A549 (cell line): ENCODE measurements at regions of chr13 and their contacts with region 1.

Region 1: DNA sequence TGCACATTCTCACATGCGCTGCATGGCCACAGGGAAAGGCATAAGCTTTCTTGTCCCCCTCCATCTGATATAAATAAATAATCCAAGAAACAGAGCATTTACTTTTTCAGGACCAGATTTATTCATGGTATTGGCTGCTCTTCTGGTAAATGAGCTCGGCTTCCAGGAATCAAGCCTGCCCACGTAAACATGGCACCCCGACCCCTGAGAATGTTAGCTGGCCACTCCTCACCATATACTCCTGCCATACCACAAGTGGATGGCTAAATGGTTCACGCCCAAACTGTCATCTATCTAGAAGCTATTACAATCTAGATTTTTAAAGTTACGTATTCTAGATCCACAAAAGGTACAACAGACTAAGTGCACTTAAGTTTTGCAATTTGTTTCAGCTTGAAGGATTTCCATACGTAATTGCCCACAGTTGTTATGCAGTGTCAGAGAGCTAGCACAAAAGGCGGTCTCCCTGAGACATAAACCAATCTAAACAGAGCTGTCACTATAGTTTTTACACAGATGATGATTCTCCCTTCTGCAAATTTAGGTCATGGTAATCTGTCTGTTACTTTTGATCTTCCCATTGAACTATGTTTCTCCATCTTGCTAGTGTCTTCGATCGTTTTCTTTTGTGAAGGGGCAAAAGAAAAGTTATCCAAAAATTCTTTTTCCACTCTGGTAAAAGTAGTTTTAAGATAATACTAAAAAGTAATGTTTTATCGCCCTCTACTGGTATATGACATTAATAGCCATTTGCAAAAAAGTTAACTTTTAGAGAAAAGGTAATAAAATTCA is 16.2 kb upstream of the FOXO1 start:
- DNase-seq: peak in 1 of 2 experiments; percentile 7
- ATAC-seq: no peak
- H3K4me3 ChIP-seq: no peak overlapping the region
- H3K27ac ChIP-seq: no peak overlapping the region
- H3K4me1 ChIP-seq: no peaks in the 10 kb centered on the region
- CTCF ChIP-seq: peak; percentile 50
- EP300 ChIP-seq: no peak
- POLR2A ChIP-seq: no peak
- RAD21 ChIP-seq: peak; percentile 55 to 77

Region 2: GRCh38 chr13:39684531-39685137 is 998.0 kb before region 1 on chr13:
- CTCF ChIA-PET with region 1: interaction called, 13 read pairs
- POLR2A ChIA-PET with region 1: no interaction called
- DNase-seq: peak; percentile 3 to 28
- ATAC-seq: peak in 1 of 2 experiments; percentile 57; a peak in 2 of 6 replicates
- H3K4me3 ChIP-seq: no peak overlapping the region
- H3K27ac ChIP-seq: no peak overlapping the region
- H3K4me1 ChIP-seq: peaks cover 3% of the 10 kb centered on the region; the same call in 1 of the 3 replicates
- CTCF ChIP-seq: peak; percentile 34; the same call in 2 of the 3 replicates
- EP300 ChIP-seq: no peak
- POLR2A ChIP-seq: no peak
- RAD21 ChIP-seq: peak; percentile 25 to 44; a peak in 3 of 5 replicates

Region 3: GRCh38 chr13:39783050-39783449 is 899.6 kb before region 1 on chr13:
- CTCF ChIA-PET with region 1: interaction called, 11 read pairs
- POLR2A ChIA-PET with region 1: no interaction called
- DNase-seq: no peak
- ATAC-seq: no peak
- H3K4me3 ChIP-seq: no peak overlapping the region
- H3K27ac ChIP-seq: no peak overlapping the region
- H3K4me1 ChIP-seq: no peaks in the 10 kb centered on the region
- CTCF ChIP-seq: peak; percentile 20; the same call in 2 of the 3 replicates
- EP300 ChIP-seq: no peak
- POLR2A ChIP-seq: no peak
- RAD21 ChIP-seq: peak; percentile 25 to 30; a peak in 4 of 5 replicates

Region 4: GRCh38 chr13:39942552-39943273 is 739.9 kb before region 1 on chr13:
- CTCF ChIA-PET with region 1: interaction called, 56 read pairs
- POLR2A ChIA-PET with region 1: no interaction called
- DNase-seq: peak; percentile 58 to 76
- ATAC-seq: peak; percentile 99 to 100
- H3K4me3 ChIP-seq: no peak overlapping the region
- H3K27ac ChIP-seq: no peak overlapping the region
- H3K4me1 ChIP-seq: no peaks in the 10 kb centered on the region
- CTCF ChIP-seq: peak; percentile 91
- EP300 ChIP-seq: no peak
- POLR2A ChIP-seq: no peak
- RAD21 ChIP-seq: peak; percentile 70 to 75

Region 5: DNA sequence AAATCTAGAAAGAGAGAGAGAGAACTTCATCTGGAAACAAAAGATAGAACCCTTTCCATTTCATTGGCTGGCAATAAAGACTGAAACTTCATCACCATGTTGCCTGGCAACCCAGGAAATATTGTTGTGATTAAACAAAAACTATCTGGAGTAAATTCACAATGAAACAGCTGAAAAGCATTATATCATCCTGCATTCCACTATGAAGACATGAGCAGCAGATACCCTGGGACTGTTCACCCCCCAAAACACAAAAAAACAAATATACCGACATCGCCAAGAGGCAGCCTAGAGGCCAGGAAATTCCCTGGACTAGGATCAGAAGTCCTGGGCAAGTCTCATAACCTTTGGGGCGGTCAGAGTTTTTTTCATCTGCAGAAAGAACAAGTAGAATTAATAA is 174.5 kb before region 1 on chr13:
- CTCF ChIA-PET with region 1: no interaction called
- POLR2A ChIA-PET with region 1: no interaction called
- DNase-seq: peak in 1 of 2 experiments; percentile 51
- ATAC-seq: peak in 1 of 2 experiments; percentile 13; a peak in 1 of 6 replicates
- H3K4me3 ChIP-seq: no peak overlapping the region
- H3K27ac ChIP-seq: no peak overlapping the region
- H3K4me1 ChIP-seq: peaks cover 30% of the 10 kb centered on the region
- CTCF ChIP-seq: no peak
- EP300 ChIP-seq: no peak
- POLR2A ChIP-seq: no peak
- RAD21 ChIP-seq: no peak

Region 6: DNA sequence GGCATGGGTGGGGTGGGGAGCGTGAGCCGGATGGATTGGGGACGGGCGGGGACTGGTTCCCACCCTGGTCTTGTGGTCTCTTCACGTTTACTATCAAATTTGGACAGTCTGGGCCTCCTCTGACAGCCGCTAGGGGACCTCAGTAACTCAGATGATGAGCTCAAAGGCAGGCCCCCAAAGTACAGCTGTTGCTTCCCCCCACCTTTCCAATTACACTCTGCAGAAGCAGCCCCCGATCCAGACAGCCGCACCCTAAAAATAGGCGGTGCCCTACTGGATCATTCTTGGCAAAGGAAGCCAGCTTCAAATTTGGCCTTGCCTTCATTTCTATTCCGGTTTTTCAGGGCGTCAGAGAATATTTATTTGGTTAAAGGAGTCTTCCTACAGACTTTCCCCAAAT is 14.3 kb before region 1 on chr13:
- CTCF ChIA-PET with region 1: interaction called, 12 read pairs
- POLR2A ChIA-PET with region 1: no interaction called
- DNase-seq: peak; percentile 47 to 66
- ATAC-seq: peak in 1 of 2 experiments; percentile 65; a peak in 3 of 6 replicates
- H3K4me3 ChIP-seq: no peak overlapping the region
- H3K27ac ChIP-seq: no peak overlapping the region
- H3K4me1 ChIP-seq: peaks cover 29% of the 10 kb centered on the region
- CTCF ChIP-seq: peak; percentile 45
- EP300 ChIP-seq: no peak
- POLR2A ChIP-seq: no peak
- RAD21 ChIP-seq: peak; percentile 28 to 42; a peak in 4 of 5 replicates

Region 7: DNA sequence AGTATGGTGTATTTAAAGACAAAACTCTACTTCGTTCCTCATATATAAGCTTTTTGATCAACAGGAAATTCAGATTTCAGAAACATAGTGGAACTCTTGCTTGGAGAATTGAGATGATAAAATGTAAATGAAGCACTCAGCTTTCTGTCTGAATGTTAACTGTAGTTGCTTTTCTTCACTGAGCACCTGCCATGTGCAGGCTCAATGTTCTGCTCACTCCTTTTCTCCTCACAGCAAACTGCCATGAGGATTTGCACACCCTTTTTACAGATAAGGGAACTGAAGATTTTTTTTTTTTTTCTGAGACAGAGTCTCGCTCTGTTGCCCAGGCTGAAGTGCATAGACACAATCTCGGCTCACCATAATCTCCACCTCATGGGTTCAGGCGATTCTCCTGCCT is 11.8 kb after region 1 on chr13:
- CTCF ChIA-PET with region 1: interaction called, 12 read pairs
- POLR2A ChIA-PET with region 1: no interaction called
- DNase-seq: no peak
- ATAC-seq: no peak
- H3K4me3 ChIP-seq: no peak overlapping the region
- H3K27ac ChIP-seq: no peak overlapping the region
- H3K4me1 ChIP-seq: no peaks in the 10 kb centered on the region
- CTCF ChIP-seq: no peak
- EP300 ChIP-seq: no peak
- POLR2A ChIP-seq: no peak
- RAD21 ChIP-seq: no peak